K562 (cell line): ENCODE measurements at regions of chrX and their contacts with region 1.

Region 1: DNA sequence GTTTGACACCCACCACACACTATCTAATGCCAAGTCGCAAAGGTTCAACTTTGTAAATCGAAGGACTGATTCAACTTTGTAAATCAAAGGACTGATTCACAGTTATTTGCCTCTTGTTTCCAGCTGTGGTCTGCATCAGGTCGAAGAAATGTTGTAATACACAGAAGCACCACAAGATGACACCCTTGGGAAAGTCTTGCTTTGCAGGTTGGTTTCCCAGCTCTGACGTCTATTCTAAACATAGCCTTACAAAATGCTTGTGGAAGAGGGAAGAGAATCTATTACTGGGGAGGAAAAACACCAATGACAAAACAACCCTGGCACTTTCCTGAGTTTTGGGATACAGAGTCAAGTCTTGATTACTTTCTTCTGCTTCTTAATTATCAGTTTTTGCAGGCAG is 35.3 kb downstream of the SUPT20HL1 start:
- DNase-seq: peak; percentile 40 to 54 (median 50)
- ATAC-seq: peak; percentile 81
- H3K4me3 ChIP-seq: no peak overlapping the region
- H3K27ac ChIP-seq: no peak overlapping the region
- H3K4me1 ChIP-seq: no peaks in the 10 kb centered on the region
- H3K27me3 ChIP-seq: peaks cover 0 to 16% of the 10 kb centered on the region in 2 experiments; a peak in 3 of 5 replicates
- CTCF ChIP-seq: peak; percentile 67 to 85 (median 67)
- EP300 ChIP-seq: no peak
- POLR2A ChIP-seq: no peak
- RAD21 ChIP-seq: peak; percentile 82 to 89

Region 2: GRCh38 chrX:25015486-25016360 is 619.9 kb after region 1 on chrX and contains the start of gene ARX:
- CTCF ChIA-PET with region 1: no interaction called
- POLR2A ChIA-PET with region 1: no interaction called
- in situ Hi-C with region 1: no loop called
- intact Hi-C with region 1: loop called (anchors 5 kb)
- DNase-seq: peak; percentile 65 to 92 (median 91)
- ATAC-seq: peak; percentile 91
- H3K4me3 ChIP-seq: no peak within 1 kb of the TSS
- H3K27ac ChIP-seq: no peak within 1 kb of the TSS
- H3K4me1 ChIP-seq: peaks cover 0 to 34% of the 10 kb centered on the region in 2 experiments; a peak in 2 of 5 replicates
- H3K27me3 ChIP-seq: peaks cover 17 to 71% of the 10 kb centered on the region in 2 experiments
- CTCF ChIP-seq: no peak
- EP300 ChIP-seq: no peak
- POLR2A ChIP-seq: no peak
- RAD21 ChIP-seq: no peak
- polyA plus RNA-seq, gene ARX: not detected